ENCODE measurements at regions of chr5 and their contacts with region 1.

Region 1: DNA sequence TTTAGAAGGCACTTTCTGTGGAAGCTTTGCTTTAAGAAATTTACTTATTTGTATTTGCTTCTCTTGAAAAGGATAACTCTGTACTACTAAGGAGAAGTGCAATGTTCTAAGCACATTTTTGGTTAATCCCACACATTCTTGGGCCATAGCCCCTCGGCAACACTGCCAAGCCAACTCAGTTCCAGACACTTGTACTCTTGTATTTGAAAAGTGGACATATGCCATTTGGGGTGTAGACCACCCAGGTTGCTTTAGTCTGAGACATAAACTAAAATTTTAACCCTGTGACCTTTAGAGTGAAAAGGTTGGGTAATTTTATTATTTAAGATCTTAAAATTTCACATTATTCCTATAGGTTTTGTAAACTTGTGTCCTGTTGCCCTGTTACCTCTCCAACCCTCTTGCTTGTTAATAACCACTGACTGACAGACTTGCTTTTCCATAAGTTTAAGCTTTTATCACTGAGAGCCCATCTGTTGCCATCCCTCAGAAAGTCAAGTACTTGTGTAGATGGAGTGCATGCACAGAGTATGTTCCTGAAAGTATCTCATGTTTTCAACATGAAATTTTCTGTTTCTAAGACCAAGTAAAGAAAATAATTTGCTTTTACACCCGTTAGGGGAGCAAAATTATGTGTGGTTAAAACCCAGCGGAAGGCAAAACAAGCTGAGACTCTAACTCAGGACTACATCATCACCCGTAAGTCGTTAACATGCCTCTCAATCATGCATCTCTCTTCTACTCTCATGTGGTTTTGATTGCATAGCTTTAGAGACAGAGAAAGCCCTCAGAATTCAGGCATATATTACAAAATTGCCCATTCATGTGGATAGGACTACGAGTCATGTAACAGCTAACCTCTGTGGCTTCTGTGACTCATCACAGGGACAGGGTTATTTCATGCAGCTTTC is 117.3 kb downstream of the GDNF start:
- DNase-seq: peak; percentile 65
- H3K4me3 ChIP-seq: no peak overlapping the region
- H3K27ac ChIP-seq: no peak overlapping the region
- H3K27me3 ChIP-seq: no peaks in the 10 kb centered on the region
- CTCF ChIP-seq: no peak

Region 2: DNA sequence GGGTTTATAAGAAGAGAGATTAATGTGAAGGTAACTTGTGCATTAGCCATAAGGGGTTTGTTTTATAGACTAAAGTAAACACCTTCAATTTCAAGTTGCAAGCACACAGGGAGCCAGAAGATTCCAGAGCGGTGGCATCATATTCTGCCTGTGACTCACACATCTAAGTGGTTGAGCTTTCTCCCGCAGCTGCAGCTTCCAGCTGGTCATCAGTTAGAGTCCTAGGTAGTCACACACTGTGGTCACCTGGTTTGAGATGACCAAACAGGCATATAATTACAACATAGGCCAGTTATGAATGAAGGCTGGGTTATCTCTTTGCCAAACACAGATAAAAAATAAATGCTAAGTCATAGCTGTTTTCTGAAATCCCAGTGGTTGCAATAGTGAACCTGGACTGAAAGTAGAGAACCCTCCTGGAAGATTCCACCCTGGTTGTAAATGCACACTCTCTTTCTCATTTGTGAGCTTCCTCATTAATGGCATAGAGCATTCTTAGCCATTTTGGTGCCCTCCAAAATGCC is 53.9 kb before region 1 on chr5:
- CTCF ChIA-PET with region 1: no interaction called
- POLR2A ChIA-PET with region 1: interaction called, 10 read pairs
- DNase-seq: peak; percentile 97
- H3K4me3 ChIP-seq: no peak overlapping the region
- H3K27ac ChIP-seq: peak overlapping the region; percentile 95
- H3K27me3 ChIP-seq: no peaks in the 10 kb centered on the region
- CTCF ChIP-seq: no peak

Region 3: DNA sequence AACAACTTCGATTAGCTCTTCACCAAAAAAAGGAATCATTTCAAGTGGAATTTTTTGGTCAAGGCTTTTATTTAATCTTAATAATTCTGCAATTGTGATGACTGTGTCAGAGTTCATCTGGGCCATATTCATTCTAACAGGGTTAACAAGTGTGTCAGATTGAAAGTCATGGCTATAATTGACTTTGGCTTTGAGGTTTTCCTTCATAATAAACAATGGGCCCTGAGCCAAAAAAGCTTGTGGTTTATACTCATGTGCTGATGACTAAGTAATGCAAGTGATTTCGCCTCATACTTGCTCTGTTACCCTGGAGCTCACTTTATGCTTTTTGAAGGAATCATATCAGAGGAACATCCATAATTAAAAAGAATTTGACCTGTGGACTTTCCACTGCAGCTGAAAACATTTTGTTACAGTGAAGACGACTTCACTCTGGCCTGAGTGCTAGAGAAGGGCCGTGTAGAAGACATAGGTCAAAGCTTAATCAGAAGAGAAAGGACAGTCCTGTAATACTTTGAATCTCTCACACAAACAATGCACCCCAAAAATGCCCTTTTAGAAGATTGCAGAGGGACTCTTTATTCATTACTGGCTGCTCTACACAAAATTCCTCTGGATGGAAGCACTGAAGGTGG is 15.7 kb after region 1 on chr5:
- CTCF ChIA-PET with region 1: interaction called, 14 read pairs
- POLR2A ChIA-PET with region 1: interaction called, 13 read pairs
- DNase-seq: peak; percentile 76
- H3K4me3 ChIP-seq: no peak overlapping the region
- H3K27ac ChIP-seq: no peak overlapping the region
- H3K27me3 ChIP-seq: no peaks in the 10 kb centered on the region
- CTCF ChIP-seq: no peak

Region 4: DNA sequence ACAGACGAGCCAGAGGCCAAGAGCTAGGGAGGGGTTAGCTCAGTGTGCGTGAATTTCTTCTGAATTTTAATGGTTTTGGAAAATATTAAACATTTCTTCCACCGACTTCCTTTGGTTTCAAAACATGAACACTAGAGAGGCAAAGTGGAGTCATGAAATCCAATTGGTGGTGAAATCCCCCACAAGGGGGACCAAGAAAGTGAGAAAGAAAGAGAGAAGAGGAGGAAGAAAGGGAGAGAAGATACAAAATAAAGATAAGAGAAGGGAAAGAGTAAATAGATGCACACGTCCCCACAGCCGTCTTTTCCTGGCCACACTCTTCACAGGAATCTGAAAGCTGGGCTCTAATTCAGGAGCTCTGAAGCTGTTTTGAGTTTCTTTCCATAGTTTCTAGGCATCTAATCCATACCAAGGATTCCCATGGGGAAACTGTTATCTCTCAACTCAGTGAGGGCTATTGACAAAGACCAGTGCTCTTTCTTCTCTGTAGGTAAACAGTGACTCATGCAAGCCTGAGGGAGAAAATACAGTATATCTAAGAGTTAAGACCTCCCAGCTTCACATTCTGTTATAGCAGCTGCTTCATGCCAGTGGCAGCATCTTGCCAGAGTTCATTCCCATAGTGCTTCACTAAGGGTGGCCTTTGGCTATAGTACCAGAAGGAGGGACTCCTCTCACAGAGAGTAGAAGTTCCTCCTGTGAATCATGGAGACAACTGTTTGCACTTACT is 949.7 kb after region 1 on chr5:
- CTCF ChIA-PET with region 1: no interaction called
- POLR2A ChIA-PET with region 1: no interaction called
- DNase-seq: peak; percentile 30
- H3K4me3 ChIP-seq: no peak overlapping the region
- H3K27ac ChIP-seq: no peak overlapping the region
- H3K27me3 ChIP-seq: peaks cover 2% of the 10 kb centered on the region
- CTCF ChIP-seq: no peak